H1 (cell line): ENCODE measurements at regions of chr22 and their contacts with region 1.

Region 1: DNA sequence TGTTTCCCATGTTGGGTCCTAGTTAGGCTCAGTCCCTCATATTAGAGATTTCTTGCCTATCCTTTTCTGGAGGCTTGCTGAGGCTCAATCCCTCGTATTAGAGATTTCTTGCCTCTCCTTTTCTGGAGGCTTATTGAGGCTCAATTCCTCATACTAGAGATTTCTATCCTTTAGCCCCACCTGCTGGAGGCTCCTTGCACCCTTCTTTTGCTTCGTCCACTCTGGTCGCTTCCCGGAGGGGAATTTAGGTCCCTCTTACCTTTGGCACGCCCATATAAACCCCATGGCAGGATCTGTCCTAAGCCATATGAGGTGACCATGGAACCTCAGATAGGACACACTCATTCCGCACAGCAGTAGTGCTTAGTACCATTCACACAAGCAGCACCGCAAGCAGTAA is 15.9 kb downstream of the CYP2D6 start:
- DNase-seq: peak in 1 of 2 experiments; percentile 80
- H3K4me3 ChIP-seq: no peak overlapping the region
- H3K27ac ChIP-seq: no peak overlapping the region
- H3K4me1 ChIP-seq: peaks cover 0 to 3% (median 1%) of the 10 kb centered on the region in 4 experiments; a peak in 3 of 7 replicates
- H3K27me3 ChIP-seq: peaks cover 0 to 1% (median under 1%) of the 10 kb centered on the region in 4 experiments; a peak in 3 of 7 replicates
- CTCF ChIP-seq: peak; percentile 61 to 77 (median 70)
- EP300 ChIP-seq: no peak
- POLR2A ChIP-seq: no peak
- RAD21 ChIP-seq: peak; percentile 83

Region 2: GRCh38 chr22:41888627-41889200 is 226.0 kb before region 1 on chr22:
- CTCF ChIA-PET with region 1: no interaction called
- POLR2A ChIA-PET with region 1: no interaction called
- DNase-seq: no peak
- H3K4me3 ChIP-seq: no peak overlapping the region
- H3K27ac ChIP-seq: no peak overlapping the region
- H3K4me1 ChIP-seq: no peaks in the 10 kb centered on the region
- H3K27me3 ChIP-seq: no peaks in the 10 kb centered on the region
- CTCF ChIP-seq: no peak
- EP300 ChIP-seq: no peak
- POLR2A ChIP-seq: no peak
- RAD21 ChIP-seq: no peak

Region 3: GRCh38 chr22:41951898-41952474 is 162.7 kb before region 1 on chr22 and contains the start of gene SMIM45:
- CTCF ChIA-PET with region 1: interaction called, 17 read pairs
- POLR2A ChIA-PET with region 1: interaction called, 3 read pairs
- DNase-seq: peak in 1 of 2 experiments; percentile 77
- H3K4me3 ChIP-seq: no peak within 1 kb of the TSS
- H3K27ac ChIP-seq: no peak within 1 kb of the TSS
- H3K4me1 ChIP-seq: peaks cover 3 to 15% (median 5%) of the 10 kb centered on the region in 4 experiments; a peak in 6 of 7 replicates
- H3K27me3 ChIP-seq: no peaks in the 10 kb centered on the region
- CTCF ChIP-seq: peak in 2 of 3 experiments; percentile 8 to 11; a peak in 2 of 4 replicates
- EP300 ChIP-seq: no peak
- POLR2A ChIP-seq: no peak
- RAD21 ChIP-seq: no peak; a peak in 2 of 4 replicates

Region 4: DNA sequence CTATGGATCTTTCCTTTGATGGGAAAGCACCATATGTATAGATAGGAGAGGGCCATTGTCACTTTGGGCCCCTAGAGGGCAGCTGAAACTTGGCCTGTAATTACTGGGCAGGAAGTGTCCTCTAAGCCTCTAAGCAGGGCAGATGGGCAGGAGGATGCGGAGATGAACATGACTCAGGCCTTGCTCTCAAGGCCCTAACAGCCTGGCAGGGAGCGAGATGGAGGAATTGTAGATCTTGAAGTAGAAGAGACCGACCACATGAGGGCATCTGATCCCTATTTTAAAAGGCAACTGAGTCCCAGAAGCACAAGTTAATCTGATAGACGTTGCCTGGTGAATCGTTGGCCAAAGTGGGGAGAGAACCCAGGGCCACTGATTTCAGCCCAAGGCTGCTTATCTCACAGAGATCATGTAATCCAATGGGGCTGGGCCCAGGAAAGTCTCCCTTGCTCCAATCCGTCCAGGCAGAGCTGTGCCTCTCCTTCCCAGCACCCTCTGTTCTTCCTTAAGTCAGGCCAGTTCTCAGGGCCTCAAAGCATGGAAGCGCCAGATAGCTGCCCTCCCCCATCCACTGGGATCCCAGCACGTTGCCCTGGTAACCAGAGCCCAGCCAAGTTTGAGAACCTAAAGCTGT is 148.0 kb before region 1 on chr22:
- CTCF ChIA-PET with region 1: interaction called, 116 read pairs
- POLR2A ChIA-PET with region 1: interaction called, 5 read pairs
- DNase-seq: peak in 1 of 2 experiments; percentile 62
- H3K4me3 ChIP-seq: no peak overlapping the region
- H3K27ac ChIP-seq: no peak overlapping the region
- H3K4me1 ChIP-seq: peaks cover 1 to 18% (median 4%) of the 10 kb centered on the region in 4 experiments; a peak in 6 of 7 replicates
- H3K27me3 ChIP-seq: no peaks in the 10 kb centered on the region; a peak in 2 of 7 replicates
- CTCF ChIP-seq: peak; percentile 18 to 63 (median 56)
- EP300 ChIP-seq: no peak
- POLR2A ChIP-seq: no peak
- RAD21 ChIP-seq: peak; percentile 75 to 80

Region 5: DNA sequence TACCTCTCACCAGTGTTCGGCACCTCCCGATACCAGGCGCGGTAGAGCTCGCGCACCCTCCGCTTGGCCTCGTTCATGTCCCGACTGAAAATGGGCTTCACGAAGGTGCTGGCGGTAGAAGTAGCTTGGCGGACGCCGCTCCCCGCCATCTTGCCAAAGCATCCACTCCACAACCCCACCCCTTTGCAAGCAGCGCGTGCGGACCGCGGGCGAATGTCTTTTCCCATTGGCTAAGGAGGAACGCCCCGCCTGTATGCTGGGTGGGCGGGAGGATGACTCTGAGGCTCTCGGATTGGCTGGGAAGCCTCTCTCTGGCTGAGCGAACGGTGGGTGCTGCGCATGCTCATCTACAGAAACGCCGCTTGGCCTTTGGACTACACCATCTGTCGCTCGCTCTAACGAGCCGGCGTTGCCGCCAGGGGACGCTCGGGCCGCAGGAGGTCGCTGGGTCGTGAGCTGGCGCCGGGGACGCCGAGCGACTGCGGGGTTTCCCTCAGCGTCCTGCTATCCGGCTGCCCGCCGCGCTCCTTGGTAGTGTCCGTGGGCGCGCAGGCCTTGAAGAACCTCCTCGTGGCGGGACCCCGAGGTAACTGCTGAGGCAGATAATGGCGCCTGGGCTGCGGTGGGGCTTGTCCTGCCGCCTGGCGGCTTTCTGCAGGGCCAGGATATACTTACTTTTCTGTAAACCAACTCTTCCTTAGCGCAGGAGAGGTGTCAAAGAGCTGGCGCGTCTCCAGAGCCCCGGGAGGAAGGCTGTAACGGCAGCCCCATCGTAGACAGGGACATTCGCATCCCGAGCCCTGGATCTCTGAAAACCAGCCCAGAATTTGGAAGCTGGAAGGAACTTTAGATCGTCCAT is 23.9 kb before region 1 on chr22 and contains the start of gene NDUFA6:
- CTCF ChIA-PET with region 1: interaction called, 55 read pairs
- POLR2A ChIA-PET with region 1: interaction called, 7 read pairs
- DNase-seq: peak; percentile 95 to 99
- H3K4me3 ChIP-seq: peak within 1 kb of the TSS; percentile 72 to 93 (median 92)
- H3K27ac ChIP-seq: peak within 1 kb of the TSS; percentile 90
- H3K4me1 ChIP-seq: peaks cover 0 to 5% (median 1%) of the 10 kb centered on the region in 4 experiments; a peak in 2 of 7 replicates
- H3K27me3 ChIP-seq: 0 out of 7 replicates have a peak, but pooled peaks cover 0 to 2% (median 0%) of the 10 kb centered on the region in 4 experiments
- CTCF ChIP-seq: peak; percentile 84 to 92 (median 86)
- EP300 ChIP-seq: 0 out of 3 replicates have a peak, but pooled peaks of 1 of the 2 experiments have one; percentile 24
- POLR2A ChIP-seq: peak; percentile 92 to 97
- RAD21 ChIP-seq: peak; percentile 69 to 76
- total RNA-seq, gene NDUFA6: 99.5 and 105 TPM in 2 replicates

Region 6: GRCh38 chr22:42156121-42156520 is 41.4 kb after region 1 on chr22:
- CTCF ChIA-PET with region 1: interaction called, 10 read pairs
- POLR2A ChIA-PET with region 1: no interaction called
- DNase-seq: no peak
- H3K4me3 ChIP-seq: no peak overlapping the region
- H3K27ac ChIP-seq: no peak overlapping the region
- H3K4me1 ChIP-seq: no peaks in the 10 kb centered on the region; a peak in 1 of 7 replicates
- H3K27me3 ChIP-seq: no peaks in the 10 kb centered on the region
- CTCF ChIP-seq: no peak
- EP300 ChIP-seq: no peak
- POLR2A ChIP-seq: no peak
- RAD21 ChIP-seq: no peak

Region 7: GRCh38 chr22:42214633-42215415 is 100.1 kb after region 1 on chr22:
- CTCF ChIA-PET with region 1: no interaction called
- POLR2A ChIA-PET with region 1: no interaction called
- DNase-seq: no peak
- H3K4me3 ChIP-seq: no peak overlapping the region
- H3K27ac ChIP-seq: no peak overlapping the region
- H3K4me1 ChIP-seq: peaks cover 10 to 22% (median 17%) of the 10 kb centered on the region in 4 experiments; a peak in 6 of 7 replicates
- H3K27me3 ChIP-seq: no peaks in the 10 kb centered on the region
- CTCF ChIP-seq: no peak
- EP300 ChIP-seq: no peak
- POLR2A ChIP-seq: no peak
- RAD21 ChIP-seq: no peak